Endothelial cell of umbilical vein (primary cell): ENCODE measurements at regions of chr3 and their contacts with region 1.

Region 1: GRCh38 chr3:183178629-183179549 is 16.4 kb upstream of the LAMP3 start:
- DNase-seq: peak; percentile 37
- H3K4me3 ChIP-seq: peak overlapping the region; percentile 38 to 78 (median 40)
- H3K27ac ChIP-seq: peak overlapping the region; percentile 7
- H3K4me1 ChIP-seq: peaks cover 5% of the 10 kb centered on the region
- H3K27me3 ChIP-seq: peaks cover 0 to 8% of the 10 kb centered on the region in 2 experiments
- CTCF ChIP-seq: peak; percentile 32 to 42
- POLR2A ChIP-seq: no peak

Region 2: GRCh38 chr3:182909318-182910040 is 269.4 kb before region 1 on chr3:
- CTCF ChIA-PET with region 1: no interaction called
- POLR2A ChIA-PET with region 1: no interaction called
- dilution Hi-C with region 1: no loop called
- intact Hi-C with region 1: loop called (anchors 1 kb)
- DNase-seq: peak; percentile 39
- H3K4me3 ChIP-seq: no peak overlapping the region
- H3K27ac ChIP-seq: no peak overlapping the region
- H3K4me1 ChIP-seq: no peaks in the 10 kb centered on the region
- H3K27me3 ChIP-seq: no peaks in the 10 kb centered on the region
- CTCF ChIP-seq: peak; percentile 31 to 43
- POLR2A ChIP-seq: no peak

Region 3: GRCh38 chr3:183131735-183132134 is 47.2 kb before region 1 on chr3:
- CTCF ChIA-PET with region 1: interaction called, 9 read pairs
- POLR2A ChIA-PET with region 1: no interaction called
- dilution Hi-C with region 1: no loop called
- intact Hi-C with region 1: loop called (anchors 1 kb)
- DNase-seq: peak; percentile 65
- H3K4me3 ChIP-seq: no peak overlapping the region
- H3K27ac ChIP-seq: peak overlapping the region; percentile 96
- H3K4me1 ChIP-seq: peaks cover 34% of the 10 kb centered on the region
- H3K27me3 ChIP-seq: no peaks in the 10 kb centered on the region
- CTCF ChIP-seq: no peak
- POLR2A ChIP-seq: no peak

Region 4: GRCh38 chr3:183161552-183162336 is 17.1 kb before region 1 on chr3:
- CTCF ChIA-PET with region 1: interaction called, 15 read pairs
- POLR2A ChIA-PET with region 1: no interaction called
- dilution Hi-C with region 1: no loop called
- intact Hi-C with region 1: no loop called
- DNase-seq: no peak
- H3K4me3 ChIP-seq: peak overlapping the region in 2 of 3 experiments; percentile 31 to 72
- H3K27ac ChIP-seq: no peak overlapping the region
- H3K4me1 ChIP-seq: peaks cover 19% of the 10 kb centered on the region
- H3K27me3 ChIP-seq: no peaks in the 10 kb centered on the region
- CTCF ChIP-seq: no peak
- POLR2A ChIP-seq: no peak

Region 5: DNA sequence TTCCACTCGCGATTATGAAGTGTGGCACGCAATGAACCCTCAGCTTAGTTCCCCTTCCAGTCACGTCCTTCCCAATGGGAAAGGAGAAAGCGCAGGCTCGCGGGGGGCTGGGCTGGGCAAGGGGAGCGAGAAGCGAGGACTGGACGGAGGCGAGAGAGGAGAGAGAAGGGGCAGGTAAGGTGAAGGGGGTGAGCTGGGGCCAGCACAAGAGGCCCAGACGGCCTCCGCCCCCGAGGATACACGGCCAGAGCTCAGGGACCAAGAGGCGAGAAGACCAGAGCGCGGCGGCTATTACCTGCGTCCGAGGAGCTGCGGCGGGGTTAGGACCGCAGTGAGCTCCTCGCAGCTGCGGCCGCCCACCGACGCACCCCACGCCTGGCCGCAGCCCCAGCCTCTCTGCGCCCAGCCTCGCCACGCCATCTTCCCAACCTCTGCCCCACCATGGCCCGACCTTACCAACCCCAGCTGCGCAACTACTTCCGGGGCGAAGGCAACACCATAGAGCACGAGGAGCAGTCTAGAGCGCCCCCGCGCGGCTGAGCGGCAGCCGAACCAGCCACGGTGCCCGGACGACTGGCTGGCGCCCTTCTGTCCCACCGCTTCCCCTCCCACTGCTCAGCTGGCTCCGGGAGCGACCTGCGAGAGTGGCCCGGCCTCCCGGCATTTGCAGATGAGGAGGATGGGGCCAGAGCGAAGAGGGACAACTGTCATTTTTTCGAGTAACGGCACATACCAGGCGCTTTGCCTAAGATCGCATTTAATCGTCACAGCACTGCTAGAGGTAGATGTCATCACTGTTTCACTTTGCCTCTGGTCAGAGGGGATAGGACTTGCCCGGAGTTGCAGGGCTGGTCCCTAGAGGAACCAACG is 705.8 kb after region 1 on chr3 and contains the start of gene PARL:
- CTCF ChIA-PET with region 1: no interaction called
- POLR2A ChIA-PET with region 1: no interaction called
- dilution Hi-C with region 1: no loop called
- intact Hi-C with region 1: loop called (anchors 1 kb)
- DNase-seq: peak; percentile 93
- H3K4me3 ChIP-seq: peak within 1 kb of the TSS; percentile 47 to 93 (median 85)
- H3K27ac ChIP-seq: peak within 1 kb of the TSS; percentile 34
- H3K4me1 ChIP-seq: peaks cover 11% of the 10 kb centered on the region
- H3K27me3 ChIP-seq: no peaks in the 10 kb centered on the region
- CTCF ChIP-seq: peak; percentile 99 to 100
- POLR2A ChIP-seq: peak; percentile 87
- total RNA-seq, gene PARL: 48.1 and 54.1 TPM in 2 replicates